ENCODE measurements at regions of chr7 and their contacts with region 1.

Region 1: GRCh38 chr7:82164813-82165212 is 278.8 kb downstream of the CACNA2D1 start:
- DNase-seq: no peak
- ATAC-seq: peak; percentile 71

Region 2: GRCh38 chr7:82204694-82205093 is 39.9 kb after region 1 on chr7:
- intact Hi-C with region 1: no loop called
- DNase-seq: peak; percentile 59
- ATAC-seq: peak; percentile 38

Region 3: GRCh38 chr7:82317257-82317721 is 152.5 kb after region 1 on chr7:
- intact Hi-C with region 1: no loop called
- DNase-seq: no peak
- ATAC-seq: no peak

Region 4: GRCh38 chr7:82572195-82572880 is 407.5 kb after region 1 on chr7:
- intact Hi-C with region 1: loop called (anchors 10 kb)
- DNase-seq: peak; percentile 77
- ATAC-seq: peak; percentile 83

Region 5: GRCh38 chr7:83053965-83054364 is 889.2 kb after region 1 on chr7:
- intact Hi-C with region 1: no loop called
- DNase-seq: no peak
- ATAC-seq: no peak